Psoas muscle (tissue), 8 donors: ENCODE measurements at regions of chr19 and their contacts with region 1.

Region 1: DNA sequence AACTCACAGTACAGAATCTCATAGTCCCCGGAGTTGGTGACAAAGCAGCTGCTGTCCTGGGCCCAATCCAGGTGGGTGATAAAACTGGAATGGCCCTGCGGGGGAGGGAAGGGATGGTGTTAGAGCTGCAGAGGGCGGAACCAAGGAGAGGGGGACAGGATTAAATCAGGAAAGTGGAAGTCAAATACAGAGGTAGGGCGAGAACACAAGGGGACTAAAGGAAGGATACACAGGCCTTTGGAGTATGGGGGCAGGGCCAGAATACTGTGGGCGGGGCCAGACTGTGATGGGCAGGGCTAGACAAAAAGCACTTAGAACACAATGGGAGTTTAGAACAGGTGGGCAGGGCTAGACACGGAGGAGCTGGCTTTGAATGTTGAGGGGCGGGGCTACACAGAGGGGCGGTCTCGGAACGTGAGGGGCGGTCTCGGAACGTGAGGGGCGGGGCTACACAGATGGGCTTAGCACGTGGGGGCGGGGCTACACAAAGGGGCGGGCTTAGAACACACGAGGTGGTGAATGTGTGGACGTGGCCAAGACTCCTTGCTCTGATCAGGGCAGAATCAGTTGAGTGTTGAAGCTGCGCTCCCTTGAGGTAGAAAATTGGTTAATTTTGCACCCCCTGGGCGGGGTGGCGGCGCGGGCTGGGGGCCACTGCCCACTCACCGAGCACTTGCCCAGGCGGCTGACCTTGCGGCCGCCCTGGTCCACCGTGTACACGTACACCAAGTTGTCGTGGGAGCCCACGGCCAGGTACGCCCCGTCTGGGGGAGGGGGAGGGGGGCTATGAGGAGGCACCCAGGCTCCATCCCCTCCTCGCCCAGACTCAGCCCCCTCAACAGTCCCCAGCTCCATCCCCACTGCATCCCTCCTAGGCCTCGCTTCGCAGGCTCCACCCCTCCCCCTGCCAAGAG is 14.0 kb upstream of the GPR4 start:
- DNase-seq: peak; percentile 82 to 91
- ATAC-seq: peak; percentile 88 to 97 (median 94)
- H3K4me3 ChIP-seq: peak overlapping the region; percentile 34
- H3K27ac ChIP-seq: peak overlapping the region; percentile 46
- H3K4me1 ChIP-seq: peaks cover 3% of the 10 kb centered on the region
- H3K27me3 ChIP-seq: no peaks in the 10 kb centered on the region
- CTCF ChIP-seq: no peak

Region 2: GRCh38 chr19:45558399-45558878 is 57.6 kb before region 1 on chr19:
- intact Hi-C with region 1: no loop called
- DNase-seq: no peak
- ATAC-seq: peak; percentile 47 to 78 (median 76)
- H3K4me3 ChIP-seq: no peak overlapping the region
- H3K27ac ChIP-seq: no peak overlapping the region
- H3K4me1 ChIP-seq: no peaks in the 10 kb centered on the region
- H3K27me3 ChIP-seq: no peaks in the 10 kb centered on the region
- CTCF ChIP-seq: peak; percentile 35

Region 3: GRCh38 chr19:45569619-45570421 is 46.2 kb before region 1 on chr19:
- intact Hi-C with region 1: no loop called
- DNase-seq: peak; percentile 63 to 83
- ATAC-seq: peak; percentile 75 to 81 (median 78)
- H3K4me3 ChIP-seq: peak overlapping the region; percentile 2
- H3K27ac ChIP-seq: peak overlapping the region; percentile 87
- H3K4me1 ChIP-seq: peaks cover 47% of the 10 kb centered on the region
- H3K27me3 ChIP-seq: no peaks in the 10 kb centered on the region
- CTCF ChIP-seq: peak; percentile 77

Region 4: GRCh38 chr19:45629704-45630103 is 13.7 kb after region 1 on chr19:
- intact Hi-C with region 1: loop called in 1 of 2 experiments (anchors 2 kb)
- DNase-seq: no peak
- ATAC-seq: no peak
- H3K4me3 ChIP-seq: no peak overlapping the region
- H3K27ac ChIP-seq: no peak overlapping the region
- H3K4me1 ChIP-seq: no peaks in the 10 kb centered on the region
- H3K27me3 ChIP-seq: no peaks in the 10 kb centered on the region
- CTCF ChIP-seq: no peak

Region 5: GRCh38 chr19:45657520-45658167 is 41.6 kb after region 1 on chr19:
- intact Hi-C with region 1: no loop called
- DNase-seq: no peak
- ATAC-seq: no peak
- H3K4me3 ChIP-seq: no peak overlapping the region
- H3K27ac ChIP-seq: no peak overlapping the region
- H3K4me1 ChIP-seq: no peaks in the 10 kb centered on the region
- H3K27me3 ChIP-seq: peaks cover 0 to 11% (median 1%) of the 10 kb centered on the region in 3 donors
- CTCF ChIP-seq: no peak